ENCODE measurements at regions of chr13 and their contacts with region 1.

Region 1: GRCh38 chr13:33229446-33230177 is 55.9 kb downstream of the STARD13 start:
- DNase-seq: peak; percentile 41 to 74 (median 48)
- ATAC-seq: peak; percentile 47 to 71
- H3K4me3 ChIP-seq: no peak overlapping the region
- H3K27ac ChIP-seq: peak overlapping the region; percentile 64
- H3K4me1 ChIP-seq: peaks cover 22% of the 10 kb centered on the region
- H3K27me3 ChIP-seq: no peaks in the 10 kb centered on the region

Region 2: GRCh38 chr13:33285420-33286124 is 56.0 kb after region 1 on chr13 and contains the start of gene STARD13:
- intact Hi-C with region 1: loop called in 3 of 4 experiments (anchors 10 kb)
- DNase-seq: peak; percentile 94 to 97 (median 95)
- ATAC-seq: peak; percentile 97 to 98
- H3K4me3 ChIP-seq: peak within 1 kb of the TSS; percentile 85
- H3K27ac ChIP-seq: peak within 1 kb of the TSS; percentile 96
- H3K4me1 ChIP-seq: peaks cover 3% of the 10 kb centered on the region
- H3K27me3 ChIP-seq: no peaks in the 10 kb centered on the region
- total RNA-seq, gene STARD13: 26.1 to 35.7 (median 30.7) TPM

Measured in right cardiac atrium (tissue), 5 donors.